Activated CD4-positive, alpha-beta T cell treated with anti-CD3 and anti-CD28 coated beads for 36 hours (primary cell): ENCODE measurements at regions of chr1 and their contacts with region 1.

Region 1: GRCh38 chr1:2545759-2546514 is 10.2 kb upstream of the TNFRSF14 start:
- DNase-seq: peak; percentile 94
- ATAC-seq: peak; percentile 34
- H3K4me3 Mint-ChIP-seq: peak overlapping the region; percentile 78
- H3K27ac Mint-ChIP-seq: no peak overlapping the region
- H3K4me1 Mint-ChIP-seq: peaks cover 16% of the 10 kb centered on the region
- H3K27me3 Mint-ChIP-seq: no peaks in the 10 kb centered on the region

Region 2: DNA sequence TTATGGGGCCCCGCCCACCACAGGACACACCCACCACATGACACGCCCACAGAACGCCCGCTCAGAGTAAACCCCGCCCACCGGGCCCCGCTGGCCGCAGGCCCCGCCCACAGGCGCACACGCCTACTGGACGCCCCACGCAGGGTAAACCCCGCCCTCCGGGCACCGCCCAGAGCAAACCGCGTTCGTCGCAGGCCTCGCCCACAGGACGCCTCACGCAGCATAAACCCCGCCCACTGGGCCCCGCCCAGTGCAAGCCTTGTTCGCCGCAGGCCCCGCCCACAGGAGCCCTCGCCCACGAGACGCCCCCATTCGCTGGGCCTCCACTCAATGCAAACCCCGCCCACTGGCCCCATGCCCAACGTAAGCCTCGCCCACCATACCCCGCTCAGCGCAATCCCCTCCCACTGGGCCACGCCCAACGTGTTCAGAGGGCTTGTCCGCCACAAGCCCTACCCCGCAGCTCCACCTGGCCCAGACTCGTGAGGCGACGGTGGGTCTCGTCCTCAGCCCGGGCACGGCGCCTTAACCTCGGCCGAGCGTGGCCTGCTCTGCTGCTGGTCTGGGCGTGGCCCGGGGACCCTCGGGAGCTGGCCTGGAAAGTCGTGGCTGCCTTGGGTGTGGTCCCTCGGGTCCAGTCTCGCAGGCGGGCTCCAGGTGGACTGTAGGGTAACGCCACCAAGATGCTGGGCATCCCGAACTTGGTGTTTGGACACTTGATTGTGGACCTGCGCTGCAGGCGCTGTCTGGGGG is 626.5 kb before region 1 on chr1:
- CTCF ChIA-PET with region 1: no interaction called
- POLR2A ChIA-PET with region 1: no interaction called
- intact Hi-C with region 1: loop called in 1 of 2 experiments (anchors 1 kb)
- DNase-seq: peak; percentile 100
- ATAC-seq: peak; percentile 92
- H3K4me3 Mint-ChIP-seq: peak overlapping the region; percentile 62
- H3K27ac Mint-ChIP-seq: no peak overlapping the region
- H3K4me1 Mint-ChIP-seq: peaks cover 4% of the 10 kb centered on the region
- H3K27me3 Mint-ChIP-seq: no peaks in the 10 kb centered on the region

Region 3: GRCh38 chr1:2205191-2205952 is 340.6 kb before region 1 on chr1:
- CTCF ChIA-PET with region 1: no interaction called
- POLR2A ChIA-PET with region 1: no interaction called
- intact Hi-C with region 1: loop called in 1 of 2 experiments (anchors 1 kb)
- DNase-seq: peak; percentile 98
- ATAC-seq: peak; percentile 88
- H3K4me3 Mint-ChIP-seq: peak overlapping the region; percentile 51
- H3K27ac Mint-ChIP-seq: no peak overlapping the region
- H3K4me1 Mint-ChIP-seq: peaks cover 3% of the 10 kb centered on the region
- H3K27me3 Mint-ChIP-seq: no peaks in the 10 kb centered on the region

Region 4: GRCh38 chr1:2233997-2234761 is 311.8 kb before region 1 on chr1:
- CTCF ChIA-PET with region 1: no interaction called
- POLR2A ChIA-PET with region 1: interaction called, 3 read pairs
- intact Hi-C with region 1: loop called in 1 of 2 experiments (anchors 1 kb)
- DNase-seq: peak; percentile 81
- ATAC-seq: peak; percentile 73
- H3K4me3 Mint-ChIP-seq: peak overlapping the region; percentile 73
- H3K27ac Mint-ChIP-seq: peak overlapping the region; percentile 90
- H3K4me1 Mint-ChIP-seq: peaks cover 59% of the 10 kb centered on the region
- H3K27me3 Mint-ChIP-seq: no peaks in the 10 kb centered on the region

Region 5: GRCh38 chr1:2391041-2391930 is 154.7 kb before region 1 on chr1 and contains the starts of genes MORN1 and RER1:
- CTCF ChIA-PET with region 1: interaction called, 4 read pairs
- POLR2A ChIA-PET with region 1: no interaction called
- intact Hi-C with region 1: loop called in 1 of 2 experiments (anchors 1 kb)
- DNase-seq: peak; percentile 100
- ATAC-seq: peak; percentile 99
- H3K4me3 Mint-ChIP-seq: peak within 1 kb of the TSS; percentile 89
- H3K27ac Mint-ChIP-seq: peak within 1 kb of the TSS; percentile 76
- H3K4me1 Mint-ChIP-seq: peaks cover 38% of the 10 kb centered on the region
- H3K27me3 Mint-ChIP-seq: no peaks in the 10 kb centered on the region
- total RNA-seq, gene MORN1: 5.1 to 6.1 TPM
- total RNA-seq, gene RER1: 146 to 152 TPM

Region 6: GRCh38 chr1:2556277-2556677 is 10.3 kb after region 1 on chr1 and contains the start of gene TNFRSF14:
- CTCF ChIA-PET with region 1: interaction called, 5 read pairs
- POLR2A ChIA-PET with region 1: interaction called, 4 read pairs
- intact Hi-C with region 1: loop called (anchors 1 kb)
- DNase-seq: peak; percentile 85
- ATAC-seq: peak; percentile 61
- H3K4me3 Mint-ChIP-seq: peak within 1 kb of the TSS; percentile 98
- H3K27ac Mint-ChIP-seq: peak within 1 kb of the TSS; percentile 98
- H3K4me1 Mint-ChIP-seq: peaks cover 36% of the 10 kb centered on the region
- H3K27me3 Mint-ChIP-seq: no peaks in the 10 kb centered on the region
- total RNA-seq, gene TNFRSF14: 135 to 145 TPM

Region 7: GRCh38 chr1:2642560-2643413 is 96.8 kb after region 1 on chr1:
- CTCF ChIA-PET with region 1: no interaction called
- POLR2A ChIA-PET with region 1: no interaction called
- intact Hi-C with region 1: loop called (anchors 1 to 2 kb)
- DNase-seq: peak; percentile 97
- ATAC-seq: peak; percentile 86
- H3K4me3 Mint-ChIP-seq: peak overlapping the region; percentile 80
- H3K27ac Mint-ChIP-seq: peak overlapping the region; percentile 83
- H3K4me1 Mint-ChIP-seq: no peaks in the 10 kb centered on the region
- H3K27me3 Mint-ChIP-seq: no peaks in the 10 kb centered on the region

Region 8: GRCh38 chr1:3069491-3070303 is 523.8 kb after region 1 on chr1:
- CTCF ChIA-PET with region 1: no interaction called
- POLR2A ChIA-PET with region 1: no interaction called
- intact Hi-C with region 1: no loop called
- DNase-seq: peak; percentile 30
- ATAC-seq: peak; percentile 36
- H3K4me3 Mint-ChIP-seq: no peak overlapping the region
- H3K27ac Mint-ChIP-seq: no peak overlapping the region
- H3K4me1 Mint-ChIP-seq: peaks cover 2% of the 10 kb centered on the region
- H3K27me3 Mint-ChIP-seq: peaks cover 20% of the 10 kb centered on the region